Transverse colon (tissue), 4 donors: ENCODE measurements at regions of chr12 and their contacts with region 1.

Region 1: GRCh38 chr12:22514875-22515274 is 29.5 kb downstream of the C2CD5 start:
- DNase-seq: no peak
- H3K4me3 ChIP-seq: no peak overlapping the region
- H3K27ac ChIP-seq: no peak overlapping the region
- H3K4me1 ChIP-seq: peaks cover 0 to 5% (median 0%) of the 10 kb centered on the region in 4 donors
- H3K27me3 ChIP-seq: no peaks in the 10 kb centered on the region
- CTCF ChIP-seq: no peak
- EP300 ChIP-seq: no peak
- POLR2A ChIP-seq: no peak

Region 2: GRCh38 chr12:22046090-22046967 is 468.5 kb before region 1 on chr12 and contains the start of gene CMAS:
- in situ Hi-C with region 1: no loop called
- intact Hi-C with region 1: loop called (anchors 5 kb)
- DNase-seq: peak; percentile 89
- H3K4me3 ChIP-seq: peak within 1 kb of the TSS; percentile 93 to 99 (median 98)
- H3K27ac ChIP-seq: peak within 1 kb of the TSS; percentile 94 to 99 (median 97)
- H3K4me1 ChIP-seq: peaks cover 4 to 74% (median 50%) of the 10 kb centered on the region in 4 donors
- H3K27me3 ChIP-seq: no peaks in the 10 kb centered on the region
- CTCF ChIP-seq: peak in 1 of 5 experiments; percentile 14
- EP300 ChIP-seq: no peak
- POLR2A ChIP-seq: peak; percentile 90
- total RNA-seq, gene CMAS: 12.3 to 92.6 (median 69.0) TPM

Region 3: DNA sequence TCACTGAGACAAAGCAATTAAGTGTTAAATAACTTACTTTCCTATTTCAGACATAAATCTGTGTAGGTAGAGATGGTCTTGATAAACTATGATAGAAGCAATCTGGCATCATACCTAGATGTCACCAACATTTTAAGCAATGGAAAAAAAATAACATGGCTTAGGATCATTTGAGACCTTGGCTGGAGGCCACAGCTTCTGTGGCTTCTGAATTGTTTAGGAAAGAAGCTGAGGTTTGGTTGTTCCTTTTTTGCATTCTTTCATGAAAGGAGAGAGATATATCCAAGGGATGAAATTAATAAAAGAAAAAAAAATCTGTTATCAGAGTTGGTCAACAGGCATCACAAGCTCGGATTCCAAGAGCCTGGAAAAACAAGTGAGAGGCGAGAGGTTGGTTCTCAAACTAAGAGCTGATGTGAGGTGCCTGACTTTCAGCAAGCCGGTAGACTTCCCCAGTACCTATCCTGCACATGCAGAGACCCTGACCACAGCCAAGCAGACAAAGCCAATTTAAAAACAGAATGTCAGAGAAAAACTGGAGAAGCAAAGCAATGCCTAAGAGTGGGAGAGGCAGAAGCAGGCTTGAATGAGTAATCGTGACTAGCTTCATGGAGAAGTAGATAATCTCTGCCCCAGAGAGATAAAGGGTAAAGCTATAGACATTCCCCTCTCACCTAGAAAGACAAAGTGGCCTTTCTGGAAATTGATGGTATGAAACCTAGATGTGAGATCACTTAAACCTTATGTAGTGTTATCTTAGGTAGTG is 137.0 kb before region 1 on chr12:
- in situ Hi-C with region 1: no loop called
- intact Hi-C with region 1: no loop called
- DNase-seq: no peak
- H3K4me3 ChIP-seq: no peak overlapping the region
- H3K27ac ChIP-seq: no peak overlapping the region
- H3K4me1 ChIP-seq: no peaks in the 10 kb centered on the region
- H3K27me3 ChIP-seq: no peaks in the 10 kb centered on the region
- CTCF ChIP-seq: no peak
- EP300 ChIP-seq: no peak
- POLR2A ChIP-seq: no peak